Colonic mucosa (tissue), 4 donors: ENCODE measurements at regions of chr9 and their contacts with region 1.

Region 1: GRCh38 chr9:114653556-114654159 is 3.9 kb downstream of the TEX53 start:
- DNase-seq: peak; percentile 86
- H3K4me3 ChIP-seq: no peak overlapping the region
- H3K27ac ChIP-seq: no peak overlapping the region
- H3K4me1 ChIP-seq: no peaks in the 10 kb centered on the region
- H3K27me3 ChIP-seq: no peaks in the 10 kb centered on the region
- CTCF ChIP-seq: peak; percentile 93

Region 2: DNA sequence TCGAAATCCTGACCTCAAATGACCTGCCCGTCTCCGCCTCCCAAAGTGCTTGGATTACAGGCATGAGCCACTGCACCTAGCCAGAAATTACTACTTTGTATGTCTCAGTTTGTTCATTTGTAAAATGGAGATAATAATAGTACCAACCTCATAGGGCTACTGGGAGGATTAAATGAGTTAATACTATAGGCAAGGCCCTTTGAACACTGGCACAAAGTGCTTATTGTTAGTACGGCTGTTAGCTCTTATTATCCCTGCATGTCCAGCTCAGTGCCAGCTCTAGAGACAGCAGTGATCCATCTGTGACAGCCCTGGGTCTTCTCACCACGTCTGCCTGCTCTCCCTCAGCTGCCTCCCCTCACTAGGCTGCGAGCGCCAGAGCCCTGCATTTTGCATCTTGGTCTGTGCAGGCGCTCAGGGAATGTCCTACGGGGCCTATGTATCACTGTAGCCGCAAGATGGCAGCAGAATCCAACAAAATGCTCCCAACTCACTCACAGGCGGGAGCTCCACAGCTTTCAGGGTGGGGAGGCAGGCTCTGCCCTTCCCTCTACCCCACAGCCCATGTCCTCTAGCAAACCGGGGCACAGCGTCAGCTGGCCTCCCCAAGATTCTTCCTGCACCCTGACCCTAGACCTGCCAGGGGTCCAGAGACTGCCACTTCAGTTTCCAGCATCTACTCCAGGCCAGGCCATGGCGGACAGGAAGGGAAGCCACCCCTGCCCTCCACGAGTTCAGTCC is 248.2 kb before region 1 on chr9:
- intact Hi-C with region 1: loop called (anchors 2 kb)
- DNase-seq: peak; percentile 82
- H3K4me3 ChIP-seq: no peak overlapping the region
- H3K27ac ChIP-seq: no peak overlapping the region
- H3K4me1 ChIP-seq: no peaks in the 10 kb centered on the region
- H3K27me3 ChIP-seq: no peaks in the 10 kb centered on the region
- CTCF ChIP-seq: peak; percentile 80

Region 3: DNA sequence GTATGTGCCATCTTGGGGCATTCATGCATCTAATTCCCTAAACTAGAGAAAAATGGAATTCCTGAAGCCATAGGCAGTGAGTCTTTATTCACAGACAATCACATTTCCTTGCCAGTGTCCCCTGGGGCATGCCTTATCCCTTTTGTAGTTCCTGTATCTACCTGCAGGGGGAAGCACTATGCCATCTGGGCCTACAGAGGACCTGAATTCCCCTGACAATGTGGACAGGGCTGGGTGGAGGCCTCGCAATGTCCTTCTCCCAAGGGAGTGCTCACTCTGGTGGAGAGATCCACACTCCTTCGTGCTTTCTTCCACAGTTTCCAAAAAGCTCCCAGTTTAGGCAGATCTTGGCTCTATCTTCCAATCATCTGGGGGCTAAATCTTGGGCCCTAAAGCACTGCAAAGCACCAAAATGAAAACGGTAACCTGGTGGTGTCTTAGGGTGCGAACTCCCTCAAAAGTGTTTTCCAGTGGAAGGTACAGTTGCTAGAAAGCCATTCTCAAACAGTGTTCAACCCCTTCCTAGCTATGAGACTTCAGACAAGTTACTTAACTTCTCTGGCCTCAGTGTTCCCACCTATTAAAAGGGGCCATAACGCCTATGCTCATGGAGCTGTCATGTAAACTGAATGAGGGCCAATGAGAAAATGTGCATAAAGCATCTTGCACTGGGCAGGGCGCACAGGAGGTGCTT is 165.9 kb before region 1 on chr9:
- intact Hi-C with region 1: loop called (anchors 5 kb)
- DNase-seq: peak; percentile 86
- H3K4me3 ChIP-seq: no peak overlapping the region
- H3K27ac ChIP-seq: no peak overlapping the region
- H3K4me1 ChIP-seq: no peaks in the 10 kb centered on the region
- H3K27me3 ChIP-seq: no peaks in the 10 kb centered on the region
- CTCF ChIP-seq: peak; percentile 80

Region 4: DNA sequence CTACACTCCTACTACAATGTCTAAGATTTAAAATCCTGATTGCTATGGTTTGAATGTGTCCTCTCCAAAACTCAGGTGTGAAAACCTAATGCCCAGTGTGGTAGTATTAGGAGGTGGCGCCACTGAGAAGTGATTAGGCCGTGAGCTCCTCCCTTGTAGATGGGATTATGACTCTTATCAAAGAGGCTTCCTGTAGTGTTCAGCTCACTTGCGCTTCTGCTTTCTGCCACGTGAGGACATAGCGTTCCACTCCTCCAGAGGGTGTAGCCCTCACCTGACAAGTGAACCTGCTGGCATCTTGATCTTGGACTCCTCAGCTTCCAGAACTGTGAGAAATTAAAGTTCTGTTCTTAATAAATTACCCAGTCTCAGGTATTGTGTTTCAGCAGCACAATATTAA is 115.4 kb before region 1 on chr9:
- intact Hi-C with region 1: loop called (anchors 5 kb)
- DNase-seq: peak; percentile 42
- H3K4me3 ChIP-seq: no peak overlapping the region
- H3K27ac ChIP-seq: no peak overlapping the region
- H3K4me1 ChIP-seq: no peaks in the 10 kb centered on the region
- H3K27me3 ChIP-seq: no peaks in the 10 kb centered on the region
- CTCF ChIP-seq: peak; percentile 24

Region 5: DNA sequence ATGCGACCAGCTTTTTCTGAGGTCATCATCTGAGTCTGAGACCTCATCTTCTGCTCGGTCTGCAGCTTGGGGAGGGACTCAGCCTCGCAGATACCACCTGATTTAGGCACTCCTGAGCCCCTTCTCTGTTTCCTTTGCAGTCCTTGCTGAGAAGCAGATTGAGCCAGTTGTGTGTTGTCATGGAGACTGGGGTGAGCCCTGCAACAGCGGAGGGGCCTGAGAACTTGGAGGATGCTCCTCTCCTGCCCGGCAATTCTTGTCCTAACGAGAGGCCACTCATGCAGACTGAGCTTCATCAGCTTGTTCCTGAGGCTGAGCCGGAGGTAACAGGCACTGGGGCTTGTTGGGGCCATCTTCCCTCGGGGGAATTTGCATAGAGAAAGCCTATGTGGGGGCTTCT is 15.3 kb before region 1 on chr9:
- intact Hi-C with region 1: loop called (anchors 2 kb)
- DNase-seq: no peak
- H3K4me3 ChIP-seq: no peak overlapping the region
- H3K27ac ChIP-seq: no peak overlapping the region
- H3K4me1 ChIP-seq: no peaks in the 10 kb centered on the region
- H3K27me3 ChIP-seq: no peaks in the 10 kb centered on the region
- CTCF ChIP-seq: no peak

Region 6: DNA sequence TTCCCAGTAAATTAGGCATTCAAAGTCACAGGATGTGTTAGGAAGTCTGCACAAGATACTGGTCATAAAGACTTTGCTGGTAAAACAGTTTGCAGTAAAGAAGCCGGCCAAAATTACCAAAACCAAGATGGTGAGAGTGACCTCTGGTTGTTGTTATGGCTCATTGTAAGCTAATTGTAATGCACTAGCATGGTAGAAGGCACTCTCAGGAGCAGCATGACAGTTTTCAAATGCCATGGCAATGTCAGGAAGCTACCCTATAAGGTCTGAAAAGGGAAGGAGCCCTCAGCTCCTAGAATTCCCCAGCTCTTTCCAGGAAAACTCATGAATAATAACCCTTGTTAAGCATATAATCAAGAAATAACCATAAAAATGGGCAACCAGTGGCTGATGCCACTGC is 528.6 kb after region 1 on chr9:
- intact Hi-C with region 1: no loop called
- DNase-seq: no peak
- H3K4me3 ChIP-seq: no peak overlapping the region
- H3K27ac ChIP-seq: no peak overlapping the region
- H3K4me1 ChIP-seq: no peaks in the 10 kb centered on the region
- H3K27me3 ChIP-seq: no peaks in the 10 kb centered on the region
- CTCF ChIP-seq: no peak